ENCODE measurements at regions of chr2 and their contacts with region 1.

Region 1: DNA sequence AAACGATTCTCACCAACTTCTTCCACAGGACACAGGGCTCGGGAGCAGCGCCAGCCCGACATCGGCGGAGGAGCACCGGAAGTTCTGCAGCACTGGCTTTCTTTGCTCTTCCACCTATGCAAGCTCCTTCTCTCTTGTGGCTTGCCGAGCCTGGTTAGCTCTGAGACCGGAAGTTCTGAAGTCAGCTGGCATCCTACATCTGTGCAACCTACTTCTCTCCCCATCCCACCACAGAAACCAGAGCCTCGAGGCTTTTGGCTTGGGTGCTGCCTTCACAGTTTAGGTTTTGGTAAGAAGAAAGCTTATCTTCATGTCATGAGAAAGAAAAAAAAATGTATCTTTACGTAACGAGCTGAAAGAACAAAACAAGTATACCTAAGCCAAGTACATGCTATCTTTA is 111.7 kb downstream of the ANKRD44 start:
- DNase-seq: peak; percentile 80
- CTCF ChIP-seq: no peak

Region 2: DNA sequence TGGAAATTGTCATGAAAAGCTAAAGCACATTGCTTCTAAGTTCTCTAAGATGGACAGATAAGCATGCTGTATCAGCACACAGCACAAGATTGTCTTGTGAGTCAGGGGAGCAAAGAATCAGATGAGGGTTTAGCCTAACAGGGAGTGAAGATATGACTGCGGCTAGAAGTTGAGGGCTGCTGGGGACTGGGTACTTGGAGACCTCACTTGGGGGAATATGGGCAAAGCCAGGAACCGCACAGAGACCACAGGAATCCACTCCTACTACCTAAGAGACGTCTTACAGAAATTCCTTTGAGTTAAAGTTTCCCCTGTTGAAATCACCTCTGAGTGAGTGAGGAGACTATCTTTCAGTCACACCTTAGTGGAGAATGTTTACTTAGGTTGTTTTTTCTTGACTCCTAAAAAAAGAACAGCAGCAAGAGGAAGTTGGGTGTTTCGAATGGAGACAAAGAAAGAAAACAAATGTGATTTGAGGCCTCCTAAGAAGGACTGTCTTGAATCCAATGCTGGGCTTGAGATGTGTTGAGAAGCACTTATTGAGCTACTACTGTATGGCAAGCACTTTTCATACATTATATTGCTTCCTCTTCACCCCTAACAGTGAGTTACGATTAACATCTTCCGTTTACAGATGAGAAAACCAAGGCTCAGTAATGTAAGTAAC is 11.0 kb after region 1 on chr2:
- CTCF ChIA-PET with region 1: interaction called, 54 read pairs
- POLR2A ChIA-PET with region 1: interaction called, 7 read pairs
- DNase-seq: peak; percentile 35
- CTCF ChIP-seq: no peak

Measured in GM10248 (cell line).